Heart right ventricle (tissue), 16 donors: ENCODE measurements at regions of chr9 and their contacts with region 1.

Region 1: DNA sequence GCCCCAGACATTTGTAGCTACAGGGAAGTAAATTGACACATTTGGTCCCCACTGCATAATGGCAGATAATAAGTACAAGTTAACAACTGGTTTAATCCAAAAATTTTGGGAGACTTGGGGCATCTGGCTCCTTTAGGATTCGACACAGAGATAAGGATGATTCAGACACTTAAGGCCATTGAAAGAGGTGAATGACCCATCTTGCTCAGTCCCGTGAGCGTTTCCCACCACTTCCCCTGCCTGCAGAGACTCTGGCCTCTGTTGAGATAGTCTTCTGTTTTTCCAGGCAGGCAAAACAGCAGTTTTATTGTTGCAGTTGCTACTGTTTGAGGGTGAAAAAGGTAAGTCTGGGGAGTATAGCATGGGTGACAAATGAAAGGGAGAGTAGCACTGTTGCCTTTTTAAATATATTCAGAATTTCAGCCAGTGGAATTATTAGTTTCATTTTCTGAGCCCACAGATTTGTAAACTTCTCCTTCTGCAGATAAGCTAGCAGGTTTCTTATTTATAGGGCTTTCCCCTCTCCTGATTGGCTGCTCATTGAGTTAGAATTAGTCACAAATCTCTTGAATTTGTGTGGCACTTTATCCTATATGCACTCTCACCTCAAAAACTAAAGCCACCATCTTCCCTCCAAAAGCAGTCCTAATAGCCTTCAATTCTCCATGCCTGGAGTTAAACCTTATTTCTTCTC is 19.3 kb downstream of the ACO1 start:
- DNase-seq: no peak
- ATAC-seq: no peak
- H3K4me3 ChIP-seq: no peak overlapping the region
- H3K27ac ChIP-seq: no peak overlapping the region
- H3K4me1 ChIP-seq: peaks cover 0 to 16% (median 0%) of the 10 kb centered on the region in 9 donors
- H3K27me3 ChIP-seq: no peaks in the 10 kb centered on the region
- CTCF ChIP-seq: no peak

Region 2: GRCh38 chr9:32456564-32456963 is 52.9 kb after region 1 on chr9:
- intact Hi-C with region 1: loop called in 2 of 10 experiments (anchors 10 kb)
- DNase-seq: no peak
- ATAC-seq: peak in 2 of 8 donors; percentile 18 to 37
- H3K4me3 ChIP-seq: no peak overlapping the region
- H3K27ac ChIP-seq: no peak overlapping the region
- H3K4me1 ChIP-seq: peaks cover 0 to 8% (median 0%) of the 10 kb centered on the region in 9 donors
- H3K27me3 ChIP-seq: no peaks in the 10 kb centered on the region
- CTCF ChIP-seq: no peak

Region 3: DNA sequence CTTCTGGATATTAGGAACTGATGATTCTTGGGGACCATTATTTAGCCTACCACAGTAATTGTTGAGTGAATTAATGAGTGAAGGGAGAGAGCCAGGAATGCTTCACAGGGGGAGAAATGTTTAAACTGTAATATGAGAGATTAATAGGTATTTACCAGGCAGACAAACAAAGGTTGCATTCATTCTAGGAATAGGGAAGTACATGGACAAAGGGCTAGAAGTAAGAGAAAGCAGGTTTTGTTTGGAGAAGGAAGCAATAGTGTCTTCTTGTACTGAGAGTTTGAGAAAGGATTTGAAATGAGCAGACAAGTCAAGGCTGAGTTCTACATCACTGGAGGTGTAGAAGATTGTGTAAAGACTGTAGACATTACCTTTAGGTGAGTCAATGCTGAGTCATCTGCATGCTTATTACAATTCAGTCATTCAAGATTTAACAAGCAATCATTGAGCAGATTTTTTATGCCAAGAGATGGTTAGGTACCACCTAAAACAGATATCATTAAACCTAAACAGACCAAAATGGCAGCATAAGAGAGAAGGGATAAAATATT is 223.8 kb after region 1 on chr9:
- intact Hi-C with region 1: no loop called
- DNase-seq: no peak
- ATAC-seq: no peak
- H3K4me3 ChIP-seq: no peak overlapping the region
- H3K27ac ChIP-seq: no peak overlapping the region
- H3K4me1 ChIP-seq: no peaks in the 10 kb centered on the region
- H3K27me3 ChIP-seq: peaks cover 0 to 24% (median 8%) of the 10 kb centered on the region in 7 donors
- CTCF ChIP-seq: no peak